ENCODE measurements at regions of chr10 and their contacts with region 1.

Region 1: DNA sequence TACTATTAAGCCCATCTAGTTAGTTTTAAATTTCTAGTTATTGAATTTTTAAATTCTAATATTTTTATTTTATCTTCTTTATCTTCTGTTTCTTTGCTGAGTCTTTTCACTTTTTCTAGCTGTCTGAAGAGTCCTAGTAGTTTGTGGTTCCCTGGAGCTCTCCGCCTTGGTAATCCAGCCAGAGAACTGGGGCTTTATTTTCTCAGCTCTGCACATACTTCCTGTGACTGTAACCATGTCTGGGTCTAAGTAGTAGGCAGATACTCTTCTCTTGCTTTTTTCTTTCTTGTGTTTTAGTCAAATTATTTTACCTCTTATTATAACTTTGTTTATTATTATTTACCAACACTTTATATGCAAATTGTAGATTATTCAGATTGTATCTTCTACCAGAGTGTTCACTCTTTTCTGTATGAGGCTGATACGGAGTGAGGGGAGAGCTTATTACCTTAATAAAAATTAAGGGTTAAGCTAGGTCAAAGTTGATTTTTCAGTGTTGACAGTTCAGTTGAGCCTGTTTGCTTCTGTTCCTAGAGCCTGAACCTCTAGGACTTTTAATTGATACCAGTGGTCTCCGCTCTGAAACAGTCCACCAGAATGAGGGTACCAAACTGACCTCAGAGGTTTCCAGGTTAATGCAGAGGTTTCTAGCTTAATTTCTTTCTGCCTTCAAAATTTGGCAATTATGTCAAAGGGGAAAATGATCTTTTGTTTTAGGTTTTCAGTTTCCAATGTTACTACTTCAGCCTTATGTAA is 155.4 kb downstream of the ADK start:
- DNase-seq: peak; percentile 36
- H3K4me3 ChIP-seq: no peak overlapping the region
- H3K27ac ChIP-seq: peak overlapping the region; percentile 20
- H3K4me1 ChIP-seq: peaks cover 45% of the 10 kb centered on the region
- H3K27me3 ChIP-seq: no peaks in the 10 kb centered on the region
- CTCF ChIP-seq: no peak

Region 2: DNA sequence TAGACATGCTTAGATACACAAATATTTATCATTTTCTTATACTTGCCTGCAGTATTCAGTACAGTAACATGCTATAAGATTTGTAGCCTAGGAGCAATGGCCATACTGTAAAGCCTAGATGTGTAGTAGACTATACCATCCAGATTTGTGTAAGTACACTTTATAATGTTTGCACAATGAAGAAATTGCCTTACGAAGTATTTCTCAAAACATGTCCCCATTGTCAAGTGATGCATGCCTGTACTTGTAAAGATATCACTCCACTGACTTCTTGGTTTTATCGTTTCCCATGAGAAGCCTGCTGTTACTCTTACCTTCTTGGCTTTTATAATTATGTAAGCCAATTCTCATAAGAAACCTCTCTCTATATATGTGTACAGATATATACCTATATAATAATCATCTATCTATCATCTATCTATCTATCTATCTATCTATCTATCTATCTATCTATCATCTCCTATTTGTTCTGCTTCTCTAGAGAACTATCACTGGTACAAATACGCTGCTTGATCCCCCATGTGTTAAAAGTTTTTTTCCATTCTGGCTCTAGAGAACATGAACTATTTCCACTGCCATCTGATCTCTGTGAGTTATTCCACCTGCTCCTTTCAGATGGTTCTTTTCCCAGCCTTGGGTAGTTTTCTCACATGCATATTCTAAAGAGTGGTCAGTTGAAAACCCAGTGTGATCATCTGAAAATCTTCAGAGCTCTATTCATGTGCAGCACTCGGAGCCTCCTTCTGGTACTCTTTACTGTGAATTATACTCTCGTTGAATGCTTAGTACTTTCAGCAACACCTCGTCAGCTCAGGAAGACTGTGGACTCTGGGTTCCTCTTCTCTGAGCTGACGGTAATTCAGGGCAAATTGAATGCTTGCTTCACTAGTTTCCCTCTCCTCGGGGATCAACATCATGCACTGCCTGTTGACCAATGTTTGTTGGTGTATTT is 323.0 kb before region 1 on chr10:
- CTCF ChIA-PET with region 1: no interaction called
- POLR2A ChIA-PET with region 1: no interaction called
- intact Hi-C with region 1: no loop called
- DNase-seq: no peak
- H3K4me3 ChIP-seq: no peak overlapping the region
- H3K27ac ChIP-seq: no peak overlapping the region
- H3K4me1 ChIP-seq: peaks cover 5% of the 10 kb centered on the region
- H3K27me3 ChIP-seq: no peaks in the 10 kb centered on the region
- CTCF ChIP-seq: no peak

Region 3: GRCh38 chr10:74419958-74420375 is 113.6 kb after region 1 on chr10:
- CTCF ChIA-PET with region 1: no interaction called
- POLR2A ChIA-PET with region 1: no interaction called
- intact Hi-C with region 1: loop called (anchors 10 kb)
- DNase-seq: peak; percentile 87
- H3K4me3 ChIP-seq: no peak overlapping the region
- H3K27ac ChIP-seq: peak overlapping the region; percentile 83
- H3K4me1 ChIP-seq: peaks cover 41% of the 10 kb centered on the region
- H3K27me3 ChIP-seq: no peaks in the 10 kb centered on the region
- CTCF ChIP-seq: peak; percentile 81

Region 4: DNA sequence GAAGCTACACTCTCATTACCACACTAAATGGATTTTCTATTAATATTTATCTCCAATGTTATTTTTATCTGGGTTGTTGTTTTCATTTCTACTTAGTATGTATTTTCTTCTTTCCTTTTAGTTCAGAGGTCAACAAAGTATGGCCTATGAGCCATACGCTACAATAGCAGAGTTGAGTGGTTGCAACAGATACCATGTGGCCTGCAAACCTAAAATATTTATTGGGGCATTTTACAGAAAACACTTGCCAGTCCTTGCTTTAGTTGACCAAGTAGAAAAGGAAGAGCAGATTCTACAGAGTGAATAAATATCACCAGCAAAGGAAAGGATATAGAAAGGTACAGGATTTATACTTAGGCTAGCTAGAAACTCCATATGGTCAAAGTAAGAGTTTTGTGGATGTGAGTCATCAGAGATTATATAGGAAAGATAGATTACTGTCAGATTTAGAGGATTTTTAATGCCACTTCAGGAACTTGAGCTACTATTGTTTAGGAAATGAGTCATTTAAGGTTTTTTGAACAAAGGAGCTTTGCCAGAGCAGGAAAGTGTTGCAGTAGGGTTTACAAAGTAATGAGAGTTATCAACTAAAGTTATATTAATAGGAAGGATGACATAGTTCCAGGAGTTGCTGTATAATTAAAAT is 196.7 kb after region 1 on chr10:
- CTCF ChIA-PET with region 1: no interaction called
- POLR2A ChIA-PET with region 1: no interaction called
- intact Hi-C with region 1: loop called (anchors 10 kb)
- DNase-seq: peak; percentile 94
- H3K4me3 ChIP-seq: no peak overlapping the region
- H3K27ac ChIP-seq: peak overlapping the region; percentile 14
- H3K4me1 ChIP-seq: peaks cover 21% of the 10 kb centered on the region
- H3K27me3 ChIP-seq: no peaks in the 10 kb centered on the region
- CTCF ChIP-seq: no peak